ENCODE measurements at regions of chr15 and their contacts with region 1.

Region 1: DNA sequence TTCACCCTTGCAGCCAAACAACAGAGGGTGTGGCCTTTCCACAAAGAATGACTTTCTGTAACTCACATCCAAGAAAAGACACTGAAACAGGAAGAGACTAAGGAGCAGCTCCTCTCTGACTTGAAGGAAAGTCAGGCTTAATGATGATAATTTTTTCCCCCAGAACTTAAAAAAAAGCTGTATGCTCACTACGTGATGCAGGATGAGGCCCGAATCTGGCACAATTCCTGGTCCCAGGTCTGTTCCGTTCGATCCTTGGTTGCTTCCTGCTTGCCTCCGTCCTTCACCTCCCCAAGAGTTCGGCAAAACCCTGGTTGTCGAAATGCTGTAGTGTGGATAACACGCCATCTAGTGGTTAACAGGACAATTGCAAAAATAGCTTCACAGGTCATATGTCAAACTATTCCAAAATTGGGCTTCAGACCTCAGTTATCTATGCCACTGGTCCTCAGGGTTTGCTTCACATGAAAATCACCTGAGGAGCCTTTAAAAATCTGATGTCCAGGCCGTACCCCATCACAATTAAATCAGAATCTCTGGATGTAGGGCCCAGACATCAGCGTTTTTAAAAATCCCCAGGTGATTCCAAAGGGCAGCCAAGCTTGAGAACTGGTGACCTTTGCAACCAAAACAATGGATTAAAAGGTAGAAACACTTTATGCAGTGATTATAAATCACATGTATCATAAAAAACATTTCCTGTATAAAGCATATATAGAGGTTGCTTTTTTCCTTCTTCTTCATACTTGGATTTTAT is 28.1 kb upstream of the SYNM start:
- DNase-seq: peak; percentile 25
- H3K4me3 ChIP-seq: peak overlapping the region; percentile 57
- H3K27ac ChIP-seq: peak overlapping the region; percentile 37
- H3K4me1 ChIP-seq: no peaks in the 10 kb centered on the region
- H3K27me3 ChIP-seq: no peaks in the 10 kb centered on the region
- CTCF ChIP-seq: peak; percentile 92

Region 2: GRCh38 chr15:98442379-98442833 is 634.3 kb before region 1 on chr15:
- intact Hi-C with region 1: loop called (anchors 10 kb)
- DNase-seq: no peak
- H3K4me3 ChIP-seq: no peak overlapping the region
- H3K27ac ChIP-seq: no peak overlapping the region
- H3K4me1 ChIP-seq: no peaks in the 10 kb centered on the region
- H3K27me3 ChIP-seq: peaks cover 45% of the 10 kb centered on the region
- CTCF ChIP-seq: peak; percentile 80

Region 3: DNA sequence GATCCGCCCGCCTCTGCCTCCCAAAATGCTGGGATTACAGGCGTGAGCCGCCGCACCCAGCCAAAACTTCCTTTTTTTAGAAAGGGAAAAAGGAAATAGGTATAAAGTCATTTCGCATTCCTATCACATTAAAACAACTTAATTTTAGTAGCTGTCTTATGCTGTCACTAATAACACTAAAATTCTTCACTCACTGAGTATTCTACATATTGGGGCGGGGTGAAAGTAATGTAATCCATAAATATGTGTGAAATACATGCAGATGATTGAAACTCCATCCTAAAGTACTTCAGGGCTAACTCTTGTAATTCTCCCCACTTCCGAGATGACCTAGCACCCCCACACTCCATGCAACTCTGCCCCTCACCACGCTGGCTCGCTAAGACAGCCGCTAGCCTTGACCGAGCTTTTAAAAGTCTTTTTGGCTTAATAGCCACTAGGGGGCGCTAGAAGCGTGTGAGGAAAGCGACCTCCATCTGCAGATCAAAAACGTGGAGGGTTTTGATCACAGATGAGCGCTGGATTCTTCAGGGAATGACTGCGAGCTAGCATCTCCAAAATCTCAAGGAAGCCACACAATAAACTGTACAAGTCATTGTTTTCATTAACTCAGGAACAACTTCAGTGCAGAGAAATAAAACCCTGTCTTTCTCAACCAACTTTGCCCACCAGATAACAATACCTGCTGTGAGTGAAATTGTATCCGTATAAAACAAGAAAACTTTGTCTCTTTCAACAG is 557.7 kb before region 1 on chr15:
- intact Hi-C with region 1: loop called (anchors 5 kb)
- DNase-seq: no peak
- H3K4me3 ChIP-seq: no peak overlapping the region
- H3K27ac ChIP-seq: no peak overlapping the region
- H3K4me1 ChIP-seq: no peaks in the 10 kb centered on the region
- H3K27me3 ChIP-seq: peaks cover 5% of the 10 kb centered on the region
- CTCF ChIP-seq: peak; percentile 88

Region 4: DNA sequence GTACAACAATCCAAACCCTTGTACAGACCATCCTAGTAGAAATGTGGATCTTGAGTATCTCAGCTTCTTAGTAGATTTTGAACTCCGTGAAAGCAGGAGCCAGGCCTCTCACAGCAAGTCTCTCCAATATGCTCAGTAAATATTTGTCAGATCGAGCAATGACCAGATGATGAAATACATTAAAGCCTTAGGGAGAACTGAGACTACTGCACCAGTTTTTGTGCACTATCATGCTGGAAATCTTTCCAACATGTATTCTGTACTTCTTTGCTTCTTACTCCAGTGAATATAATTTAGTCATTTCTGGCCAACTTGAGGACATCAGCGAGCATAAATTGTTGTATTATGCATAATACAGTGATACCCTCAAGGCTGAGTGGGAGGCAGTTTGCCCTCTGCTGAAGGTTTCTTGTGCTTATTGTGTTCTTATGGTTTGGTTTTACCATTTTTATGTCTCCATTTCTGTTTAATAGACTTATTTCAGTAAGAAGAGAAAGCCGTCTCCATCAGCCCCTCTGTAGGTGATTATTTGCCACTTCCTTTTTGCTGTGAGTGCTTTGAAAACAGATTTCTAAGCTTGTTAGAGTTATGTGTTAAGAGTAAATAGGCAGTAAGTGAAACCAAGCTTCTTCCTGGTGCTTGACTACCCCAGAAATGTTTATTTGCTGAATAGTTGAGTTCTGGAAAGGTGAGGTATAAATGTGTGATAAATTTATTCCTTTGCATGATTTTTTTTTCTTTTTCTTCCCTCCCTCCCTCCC is 216.3 kb before region 1 on chr15:
- intact Hi-C with region 1: loop called (anchors 5 kb)
- DNase-seq: no peak
- H3K4me3 ChIP-seq: no peak overlapping the region
- H3K27ac ChIP-seq: no peak overlapping the region
- H3K4me1 ChIP-seq: peaks cover 72% of the 10 kb centered on the region
- H3K27me3 ChIP-seq: no peaks in the 10 kb centered on the region
- CTCF ChIP-seq: no peak

Measured in left ventricle myocardium inferior (tissue), 1 donor.